T-cell (primary cell): ENCODE measurements at regions of chr1 and their contacts with region 1.

Region 1: GRCh38 chr1:7845761-7846160 is 7.1 kb downstream of the UTS2 start:
- DNase-seq: no peak
- ATAC-seq: no peak
- H3K4me3 ChIP-seq: no peak overlapping the region
- H3K4me3 Mint-ChIP-seq: no peak overlapping the region
- H3K27ac ChIP-seq: no peak overlapping the region
- H3K27ac Mint-ChIP-seq: no peak overlapping the region
- H3K4me1 ChIP-seq: no peaks in the 10 kb centered on the region
- H3K4me1 Mint-ChIP-seq: peaks cover 0 to 3% (median 0%) of the 10 kb centered on the region in 3 donors
- H3K27me3 ChIP-seq: no peaks in the 10 kb centered on the region
- H3K27me3 Mint-ChIP-seq: no peaks in the 10 kb centered on the region

Region 2: DNA sequence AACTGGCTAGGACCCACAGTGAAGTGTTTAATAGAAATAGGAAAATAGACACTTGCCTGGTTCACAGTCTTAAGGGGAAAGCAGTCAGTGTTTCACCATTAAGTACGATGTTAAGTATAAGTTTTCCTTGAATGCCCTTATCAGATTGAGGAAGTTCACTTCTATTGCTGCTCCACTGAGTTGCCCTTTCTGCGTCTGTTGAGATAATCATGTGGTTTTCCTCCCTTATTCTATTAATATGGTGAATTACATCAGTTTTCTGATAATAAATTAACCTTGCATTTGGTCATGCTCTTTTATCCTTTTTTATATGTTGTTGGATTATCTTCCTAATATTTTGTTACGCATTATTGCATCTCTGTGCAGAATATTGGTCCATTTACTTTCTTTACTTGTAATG is 14.3 kb before region 1 on chr1:
- CTCF ChIA-PET with region 1: no interaction called
- POLR2A ChIA-PET with region 1: no interaction called
- DNase-seq: no peak
- ATAC-seq: no peak
- H3K4me3 ChIP-seq: no peak overlapping the region
- H3K4me3 Mint-ChIP-seq: no peak overlapping the region
- H3K27ac ChIP-seq: no peak overlapping the region
- H3K27ac Mint-ChIP-seq: no peak overlapping the region
- H3K4me1 ChIP-seq: peaks cover 0 to 8% of the 10 kb centered on the region in 2 experiments
- H3K4me1 Mint-ChIP-seq: peaks cover 0 to 24% (median 2%) of the 10 kb centered on the region in 3 donors
- H3K27me3 ChIP-seq: no peaks in the 10 kb centered on the region
- H3K27me3 Mint-ChIP-seq: no peaks in the 10 kb centered on the region

Region 3: DNA sequence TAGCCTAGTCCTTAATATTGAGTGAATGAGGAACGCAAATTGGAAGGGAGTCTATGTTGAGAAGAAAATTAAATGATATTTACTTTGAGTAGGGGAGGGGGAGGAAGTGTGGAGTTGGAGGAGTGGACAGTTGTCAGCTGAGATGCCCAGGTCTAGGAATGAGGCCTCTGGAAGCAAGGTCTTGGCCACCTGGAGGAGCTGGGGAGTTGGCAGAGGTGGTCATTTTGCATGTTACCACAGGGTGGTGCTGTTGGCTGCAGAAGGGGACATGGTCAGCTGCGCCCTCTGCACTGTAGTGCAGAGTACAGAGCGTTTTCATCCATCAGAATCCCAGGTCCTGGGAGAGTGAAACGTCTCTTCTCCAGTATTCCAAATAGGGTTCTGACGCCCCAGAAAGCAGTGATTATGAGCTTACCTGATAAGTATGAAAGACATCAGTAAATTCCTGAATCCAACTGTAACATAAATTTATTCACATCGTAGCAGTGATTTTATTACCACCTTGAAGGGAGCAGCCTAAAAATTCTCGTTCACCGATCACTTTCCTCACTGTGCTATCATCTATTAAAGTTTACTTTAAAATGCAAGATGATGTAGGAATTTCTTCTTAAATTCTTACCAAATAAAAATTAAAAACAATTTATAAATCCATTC is 129.6 kb after region 1 on chr1:
- CTCF ChIA-PET with region 1: no interaction called
- POLR2A ChIA-PET with region 1: no interaction called
- DNase-seq: peak in 13 of 35 experiments; percentile 4 to 49 (median 10)
- ATAC-seq: peak in 3 of 4 experiments; percentile 51 to 57 (median 52)
- H3K4me3 ChIP-seq: no peak overlapping the region
- H3K4me3 Mint-ChIP-seq: no peak overlapping the region
- H3K27ac ChIP-seq: no peak overlapping the region
- H3K27ac Mint-ChIP-seq: peak overlapping the region; percentile 44
- H3K4me1 ChIP-seq: no peaks in the 10 kb centered on the region
- H3K4me1 Mint-ChIP-seq: peaks cover 3 to 8% (median 5%) of the 10 kb centered on the region in 3 donors
- H3K27me3 ChIP-seq: no peaks in the 10 kb centered on the region
- H3K27me3 Mint-ChIP-seq: no peaks in the 10 kb centered on the region

Region 4: DNA sequence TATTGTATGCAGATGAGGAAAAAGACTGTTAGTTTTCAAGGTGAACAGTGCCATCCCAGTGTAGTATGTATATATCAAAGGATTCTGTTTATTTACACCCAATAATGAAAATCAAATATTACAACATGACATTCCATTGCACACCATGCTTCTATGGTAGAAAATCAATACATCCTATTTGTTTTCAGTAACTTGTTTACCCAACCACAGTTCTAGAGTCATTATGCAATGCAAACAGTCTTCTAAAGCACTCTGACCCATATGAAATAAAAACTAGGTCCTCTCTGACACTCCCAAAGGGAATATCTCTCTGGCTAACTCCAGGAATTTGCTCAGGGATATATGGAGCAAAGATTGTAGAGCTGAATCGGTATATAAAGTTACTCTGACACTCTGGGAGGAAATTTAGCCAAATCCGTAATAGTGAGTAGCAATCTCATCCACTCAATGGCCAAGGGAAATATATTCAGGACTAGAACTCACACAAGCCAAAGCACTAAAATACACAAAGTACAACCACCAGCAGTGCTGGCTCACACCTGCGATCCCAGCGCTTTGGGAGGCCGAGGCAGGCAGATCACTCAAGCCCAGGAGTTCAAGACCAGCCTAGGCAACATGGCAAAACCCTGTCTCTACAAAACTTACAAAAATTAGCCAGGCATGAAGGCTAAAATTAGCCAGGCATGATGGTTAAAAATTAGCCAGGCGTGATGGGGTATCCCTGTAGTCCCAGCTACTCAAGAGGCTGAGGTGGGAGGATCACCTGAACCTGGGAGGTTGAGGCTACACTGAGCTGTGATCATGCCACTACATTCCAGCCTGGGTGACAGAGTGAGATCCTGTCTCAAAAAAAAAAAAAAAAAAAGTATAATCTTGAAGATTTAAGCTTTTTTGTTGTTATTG is 896.5 kb after region 1 on chr1:
- CTCF ChIA-PET with region 1: no interaction called
- POLR2A ChIA-PET with region 1: interaction called in 1 of 2 experiments, 10 read pairs
- DNase-seq: no peak
- ATAC-seq: no peak
- H3K4me3 ChIP-seq: no peak overlapping the region
- H3K4me3 Mint-ChIP-seq: no peak overlapping the region
- H3K27ac ChIP-seq: no peak overlapping the region
- H3K27ac Mint-ChIP-seq: no peak overlapping the region
- H3K4me1 ChIP-seq: no peaks in the 10 kb centered on the region
- H3K4me1 Mint-ChIP-seq: peaks cover 0 to 7% (median 2%) of the 10 kb centered on the region in 3 donors
- H3K27me3 ChIP-seq: no peaks in the 10 kb centered on the region
- H3K27me3 Mint-ChIP-seq: no peaks in the 10 kb centered on the region